CD8-positive, alpha-beta T cell (primary cell): ENCODE measurements at regions of chrX and their contacts with region 1.

Region 1: GRCh38 chrX:40647307-40648197 is at the start of gene CXorf38:
- DNase-seq: peak; percentile 82 to 98 (median 91)
- ATAC-seq: peak; percentile 74
- H3K4me3 ChIP-seq: peak within 1 kb of the TSS; percentile 63 to 72
- H3K4me3 Mint-ChIP-seq: peak within 1 kb of the TSS; percentile 95
- H3K27ac ChIP-seq: peak within 1 kb of the TSS; percentile 65 to 87
- H3K27ac Mint-ChIP-seq: peak within 1 kb of the TSS; percentile 96
- H3K4me1 ChIP-seq: peaks cover 17% of the 10 kb centered on the region
- H3K4me1 Mint-ChIP-seq: peaks cover 33% of the 10 kb centered on the region
- H3K27me3 ChIP-seq: no peaks in the 10 kb centered on the region
- H3K27me3 Mint-ChIP-seq: no peaks in the 10 kb centered on the region
- CTCF ChIP-seq: no peak
- total RNA-seq, gene CXorf38: 10.6 to 11.0 TPM

Region 2: GRCh38 chrX:40485102-40485826 is 162.3 kb before region 1 on chrX:
- CTCF ChIA-PET with region 1: no interaction called
- POLR2A ChIA-PET with region 1: no interaction called
- intact Hi-C with region 1: no loop called
- DNase-seq: no peak
- ATAC-seq: no peak
- H3K4me3 ChIP-seq: no peak overlapping the region
- H3K4me3 Mint-ChIP-seq: no peak overlapping the region
- H3K27ac ChIP-seq: no peak overlapping the region
- H3K27ac Mint-ChIP-seq: no peak overlapping the region
- H3K4me1 ChIP-seq: no peaks in the 10 kb centered on the region
- H3K4me1 Mint-ChIP-seq: peaks cover 11% of the 10 kb centered on the region
- H3K27me3 ChIP-seq: no peaks in the 10 kb centered on the region
- H3K27me3 Mint-ChIP-seq: no peaks in the 10 kb centered on the region
- CTCF ChIP-seq: no peak

Region 3: DNA sequence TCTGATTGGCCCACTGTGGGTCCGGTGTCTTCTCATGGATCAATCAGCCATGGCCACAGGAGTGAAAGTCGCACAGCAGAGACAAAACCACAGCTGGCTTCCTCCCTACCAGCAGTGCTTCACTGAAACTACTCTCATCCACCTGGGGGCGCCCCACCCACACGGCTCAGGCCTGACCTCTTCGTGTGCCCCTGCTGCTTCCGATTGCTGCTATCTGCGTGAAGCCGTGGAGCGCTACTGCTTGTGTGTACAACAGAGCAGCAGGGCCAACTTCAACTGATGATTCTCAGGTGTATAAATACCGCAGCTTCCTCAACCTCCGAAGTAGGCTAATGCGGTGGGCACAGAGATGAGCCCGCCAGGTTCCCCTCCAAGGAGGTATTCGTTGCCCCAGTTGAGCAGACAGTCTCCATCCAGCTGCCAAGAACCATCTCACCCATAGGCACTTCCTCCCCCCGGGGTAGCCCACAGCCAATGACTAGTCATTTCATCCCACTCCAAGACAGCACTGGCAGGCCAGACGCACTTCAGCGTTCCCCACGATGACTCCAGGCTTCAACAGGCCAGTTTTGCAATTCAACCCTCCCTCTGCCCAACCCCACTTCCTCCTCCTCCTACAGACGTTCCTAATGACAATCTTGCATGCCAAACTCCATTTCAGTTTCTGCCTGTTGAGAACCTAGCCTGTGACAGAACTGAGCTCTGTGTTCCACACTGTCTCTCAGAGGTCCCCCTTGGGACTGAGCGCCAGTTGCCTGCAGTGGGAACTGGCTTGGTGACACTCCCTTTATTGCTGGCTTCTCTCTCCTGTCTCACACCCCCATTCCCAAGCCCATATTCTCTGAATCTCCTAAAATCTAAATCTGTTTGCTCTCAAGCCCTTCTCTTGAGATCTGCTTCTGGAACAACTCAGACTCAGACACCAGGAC is 108.1 kb before region 1 on chrX:
- CTCF ChIA-PET with region 1: interaction called, 17 read pairs
- POLR2A ChIA-PET with region 1: no interaction called
- intact Hi-C with region 1: loop called (anchors 1 to 2 kb)
- DNase-seq: peak; percentile 46 to 80 (median 72)
- ATAC-seq: peak; percentile 94
- H3K4me3 ChIP-seq: no peak overlapping the region
- H3K4me3 Mint-ChIP-seq: peak overlapping the region; percentile 50
- H3K27ac ChIP-seq: no peak overlapping the region
- H3K27ac Mint-ChIP-seq: peak overlapping the region; percentile 76
- H3K4me1 ChIP-seq: peaks cover 11% of the 10 kb centered on the region
- H3K4me1 Mint-ChIP-seq: peaks cover 20% of the 10 kb centered on the region
- H3K27me3 ChIP-seq: no peaks in the 10 kb centered on the region
- H3K27me3 Mint-ChIP-seq: no peaks in the 10 kb centered on the region
- CTCF ChIP-seq: peak; percentile 35

Region 4: DNA sequence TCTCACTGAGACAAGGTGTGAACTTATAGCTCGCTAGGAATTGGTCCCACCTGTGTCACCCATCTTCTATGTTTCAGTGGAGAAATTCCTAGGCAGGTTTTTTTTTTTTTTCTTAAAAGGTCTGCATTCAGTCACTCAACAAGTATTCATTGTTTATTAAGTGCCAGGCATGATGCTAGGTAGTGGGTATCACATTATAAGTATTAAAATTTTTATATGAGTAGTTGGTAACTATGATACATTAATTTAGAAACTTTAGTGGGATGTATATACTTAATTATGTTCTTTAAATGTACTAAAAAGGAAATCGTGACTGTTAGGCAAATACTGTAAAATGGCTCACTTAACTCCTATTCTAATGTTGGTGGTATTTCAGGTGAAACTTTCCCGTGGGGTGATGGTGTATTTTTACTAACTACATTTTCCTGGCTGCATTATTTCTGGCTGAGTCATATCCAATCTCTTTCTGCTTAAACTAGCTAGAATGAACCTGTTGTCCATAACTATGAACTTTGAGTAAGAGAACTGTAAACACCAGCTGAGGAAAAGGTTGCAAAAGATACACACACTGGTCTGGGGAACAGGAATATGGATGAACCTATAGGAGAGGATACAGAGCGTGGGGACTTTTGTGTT is 137.1 kb after region 1 on chrX:
- CTCF ChIA-PET with region 1: interaction called, 12 read pairs
- POLR2A ChIA-PET with region 1: no interaction called
- intact Hi-C with region 1: no loop called
- DNase-seq: no peak
- ATAC-seq: no peak
- H3K4me3 ChIP-seq: no peak overlapping the region
- H3K4me3 Mint-ChIP-seq: no peak overlapping the region
- H3K27ac ChIP-seq: no peak overlapping the region
- H3K27ac Mint-ChIP-seq: no peak overlapping the region
- H3K4me1 ChIP-seq: no peaks in the 10 kb centered on the region
- H3K4me1 Mint-ChIP-seq: no peaks in the 10 kb centered on the region
- H3K27me3 ChIP-seq: no peaks in the 10 kb centered on the region
- H3K27me3 Mint-ChIP-seq: no peaks in the 10 kb centered on the region
- CTCF ChIP-seq: no peak

Region 5: GRCh38 chrX:41084044-41084892 is 436.7 kb after region 1 on chrX:
- CTCF ChIA-PET with region 1: no interaction called
- POLR2A ChIA-PET with region 1: no interaction called
- intact Hi-C with region 1: loop called in 1 of 2 experiments (anchors 1 kb)
- DNase-seq: peak; percentile 88 to 100 (median 96)
- ATAC-seq: peak; percentile 66
- H3K4me3 ChIP-seq: peak overlapping the region; percentile 68 to 95
- H3K4me3 Mint-ChIP-seq: peak overlapping the region; percentile 95
- H3K27ac ChIP-seq: peak overlapping the region; percentile 98 to 100
- H3K27ac Mint-ChIP-seq: peak overlapping the region; percentile 100
- H3K4me1 ChIP-seq: peaks cover 19% of the 10 kb centered on the region
- H3K4me1 Mint-ChIP-seq: peaks cover 24% of the 10 kb centered on the region
- H3K27me3 ChIP-seq: no peaks in the 10 kb centered on the region
- H3K27me3 Mint-ChIP-seq: no peaks in the 10 kb centered on the region
- CTCF ChIP-seq: no peak

Region 6: GRCh38 chrX:41145920-41146608 is 498.5 kb after region 1 on chrX:
- CTCF ChIA-PET with region 1: no interaction called
- POLR2A ChIA-PET with region 1: no interaction called
- intact Hi-C with region 1: loop called in 1 of 2 experiments (anchors 10 kb)
- DNase-seq: peak in 1 of 9 experiments; percentile 3
- ATAC-seq: no peak
- H3K4me3 ChIP-seq: no peak overlapping the region
- H3K4me3 Mint-ChIP-seq: no peak overlapping the region
- H3K27ac ChIP-seq: no peak overlapping the region
- H3K27ac Mint-ChIP-seq: no peak overlapping the region
- H3K4me1 ChIP-seq: no peaks in the 10 kb centered on the region
- H3K4me1 Mint-ChIP-seq: peaks cover 3% of the 10 kb centered on the region
- H3K27me3 ChIP-seq: no peaks in the 10 kb centered on the region
- H3K27me3 Mint-ChIP-seq: no peaks in the 10 kb centered on the region
- CTCF ChIP-seq: no peak

Region 7: DNA sequence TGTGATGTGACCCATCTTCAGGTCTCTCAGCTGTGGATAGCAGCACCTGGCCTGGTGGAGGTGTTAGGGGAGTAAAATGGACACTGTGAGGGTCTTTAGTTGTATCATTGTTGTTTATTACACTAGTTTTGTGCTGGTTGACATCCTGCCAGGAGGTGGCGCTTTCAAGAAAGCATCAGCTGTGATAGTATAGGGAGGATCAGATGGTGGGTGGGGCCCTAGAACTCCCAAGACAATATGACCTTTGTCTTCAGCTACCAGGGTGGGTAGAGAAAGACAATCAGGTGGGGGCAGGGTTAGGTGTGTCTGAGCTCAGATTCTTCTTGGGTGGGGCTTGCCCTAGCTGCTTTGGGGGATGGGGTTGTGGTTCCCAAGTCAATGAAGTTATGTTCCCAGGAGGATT is 1967.6 kb after region 1 on chrX:
- CTCF ChIA-PET with region 1: no interaction called
- POLR2A ChIA-PET with region 1: no interaction called
- intact Hi-C with region 1: no loop called
- DNase-seq: peak in 4 of 9 experiments; percentile 10 to 52 (median 15)
- ATAC-seq: no peak
- H3K4me3 ChIP-seq: no peak overlapping the region
- H3K4me3 Mint-ChIP-seq: no peak overlapping the region
- H3K27ac ChIP-seq: no peak overlapping the region
- H3K27ac Mint-ChIP-seq: no peak overlapping the region
- H3K4me1 ChIP-seq: peaks cover 6% of the 10 kb centered on the region
- H3K4me1 Mint-ChIP-seq: peaks cover 23% of the 10 kb centered on the region
- H3K27me3 ChIP-seq: no peaks in the 10 kb centered on the region
- H3K27me3 Mint-ChIP-seq: no peaks in the 10 kb centered on the region
- CTCF ChIP-seq: no peak